ENCODE measurements at regions of chr19 and their contacts with region 1.

Region 1: GRCh38 chr19:51473009-51473707 is 5.2 kb upstream of the CEACAM18 start:
- DNase-seq: peak; percentile 74 to 94 (median 80)
- ATAC-seq: peak; percentile 66
- H3K4me3 ChIP-seq: no peak overlapping the region
- H3K27ac ChIP-seq: no peak overlapping the region
- H3K4me1 ChIP-seq: peaks cover 19 to 33% of the 10 kb centered on the region in 2 experiments
- H3K27me3 ChIP-seq: no peaks in the 10 kb centered on the region
- CTCF ChIP-seq: peak; percentile 93 to 98 (median 93)
- EP300 ChIP-seq: 0 out of 2 replicates have a peak, but pooled peaks have one; percentile 34
- POLR2A ChIP-seq: no peak
- RAD21 ChIP-seq: peak; percentile 91 to 98

Region 2: GRCh38 chr19:51422053-51422448 is 51.1 kb before region 1 on chr19:
- CTCF ChIA-PET with region 1: no interaction called
- POLR2A ChIA-PET with region 1: interaction called, 3 read pairs
- in situ Hi-C with region 1: no loop called
- intact Hi-C with region 1: loop called (anchors 1 kb)
- DNase-seq: peak; percentile 90 to 95 (median 94)
- ATAC-seq: peak; percentile 95
- H3K4me3 ChIP-seq: no peak overlapping the region
- H3K27ac ChIP-seq: no peak overlapping the region
- H3K4me1 ChIP-seq: peaks cover 3 to 23% of the 10 kb centered on the region in 2 experiments
- H3K27me3 ChIP-seq: no peaks in the 10 kb centered on the region
- CTCF ChIP-seq: peak; percentile 96
- EP300 ChIP-seq: peak; percentile 18; the same call in 1 of the 2 replicates
- POLR2A ChIP-seq: no peak
- RAD21 ChIP-seq: peak; percentile 98 to 100

Region 3: DNA sequence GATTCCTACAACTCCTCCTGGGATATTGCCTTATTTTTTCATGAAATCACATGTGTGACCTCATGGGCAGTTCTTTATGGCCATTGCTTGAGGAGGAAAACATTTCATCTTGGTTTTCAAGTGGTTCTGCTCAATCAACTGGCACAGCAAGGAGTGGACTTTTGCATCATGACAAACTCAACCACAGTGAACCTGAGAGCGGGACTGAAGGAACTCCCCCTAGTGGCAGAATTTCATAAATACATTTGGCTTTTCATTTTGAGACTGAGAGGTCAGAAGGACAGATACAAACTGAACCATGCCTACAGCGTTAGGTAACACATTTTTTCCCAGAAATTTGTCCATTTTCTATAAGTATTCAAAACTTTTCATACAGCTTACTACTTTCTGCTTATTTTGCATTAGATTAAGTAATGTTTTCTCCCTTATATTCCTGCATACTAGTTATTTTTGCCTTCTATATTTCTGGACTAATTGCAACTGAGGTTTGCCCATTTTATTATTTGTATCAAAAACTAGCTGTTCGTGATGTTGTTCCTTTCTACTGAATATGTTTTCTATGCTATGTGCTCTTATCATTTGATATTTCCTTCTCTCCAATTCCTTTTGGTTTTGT is 41.8 kb after region 1 on chr19:
- CTCF ChIA-PET with region 1: no interaction called
- POLR2A ChIA-PET with region 1: no interaction called
- in situ Hi-C with region 1: no loop called
- intact Hi-C with region 1: loop called (anchors 2 kb)
- DNase-seq: peak; percentile 72 to 85 (median 74)
- ATAC-seq: peak; percentile 87
- H3K4me3 ChIP-seq: no peak overlapping the region
- H3K27ac ChIP-seq: no peak overlapping the region
- H3K4me1 ChIP-seq: peaks cover 11 to 15% of the 10 kb centered on the region in 2 experiments
- H3K27me3 ChIP-seq: no peaks in the 10 kb centered on the region
- CTCF ChIP-seq: peak; percentile 78 to 88 (median 83)
- EP300 ChIP-seq: peak; percentile 43; the same call in 1 of the 2 replicates
- POLR2A ChIP-seq: no peak
- RAD21 ChIP-seq: peak; percentile 60 to 78

Region 4: DNA sequence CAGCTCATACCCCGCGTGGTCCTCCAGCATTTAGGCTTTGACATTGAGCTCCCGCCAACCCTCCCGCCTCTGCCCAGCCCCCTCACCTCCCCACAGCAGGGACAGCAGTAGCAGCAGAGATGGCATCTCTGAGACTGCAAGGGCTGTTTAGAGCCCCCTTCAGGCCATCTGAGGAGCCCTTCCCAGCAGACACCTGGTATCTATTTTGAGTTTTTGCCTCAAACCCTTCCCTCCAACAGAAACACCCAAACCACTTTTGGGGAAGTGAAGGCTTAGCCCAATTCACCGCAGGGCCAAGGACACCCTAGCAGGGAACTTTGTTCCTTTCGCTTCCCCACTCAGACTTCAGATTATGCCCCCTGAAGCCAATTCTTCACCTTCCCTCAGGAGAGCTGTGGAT is 91.6 kb after region 1 on chr19:
- CTCF ChIA-PET with region 1: interaction called, 4 read pairs
- POLR2A ChIA-PET with region 1: no interaction called
- in situ Hi-C with region 1: loop called (anchors 10 kb)
- intact Hi-C with region 1: loop called (anchors 5 kb)
- DNase-seq: peak; percentile 27 to 57 (median 47)
- ATAC-seq: peak; percentile 83
- H3K4me3 ChIP-seq: no peak overlapping the region
- H3K27ac ChIP-seq: peak overlapping the region; percentile 19; the same call in 1 of the 3 replicates
- H3K4me1 ChIP-seq: peaks cover 14 to 51% of the 10 kb centered on the region in 2 experiments; a peak in 4 of 5 replicates
- H3K27me3 ChIP-seq: no peaks in the 10 kb centered on the region
- CTCF ChIP-seq: peak; percentile 61 to 63 (median 63)
- EP300 ChIP-seq: no peak; the same call in 1 of the 2 replicates
- POLR2A ChIP-seq: no peak
- RAD21 ChIP-seq: peak; percentile 7 to 49; a peak in 2 of 4 replicates

Region 5: DNA sequence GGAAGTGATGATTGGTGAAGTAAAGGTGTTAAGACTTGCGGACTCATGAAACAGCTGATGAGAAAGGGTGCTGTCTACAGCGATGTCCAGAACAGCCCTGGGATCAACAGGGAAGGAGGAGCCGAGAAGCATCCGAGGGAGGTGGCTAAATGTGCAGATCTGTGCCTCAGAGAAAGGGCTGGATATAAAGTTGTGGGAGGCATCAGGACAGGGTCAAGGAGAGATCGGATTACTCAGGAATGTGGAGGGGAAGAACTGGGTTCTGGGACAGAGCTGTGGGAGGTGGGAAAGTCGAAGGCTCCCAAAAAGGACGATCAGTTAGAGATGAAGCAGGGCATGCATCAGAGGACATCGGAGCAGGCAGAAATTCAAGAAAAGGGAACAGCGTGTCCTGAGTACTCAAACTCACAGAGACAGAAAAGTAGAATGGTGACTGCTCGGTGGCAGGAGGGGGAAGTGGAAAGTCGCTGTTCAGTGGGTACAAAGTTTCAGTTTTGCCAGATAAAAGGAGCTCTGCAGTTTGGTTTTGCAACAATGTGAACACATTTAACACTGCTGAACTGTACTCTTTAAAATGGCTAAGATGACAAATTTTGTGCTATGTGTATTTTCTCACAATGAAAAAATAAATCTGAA is 171.6 kb after region 1 on chr19:
- CTCF ChIA-PET with region 1: no interaction called
- POLR2A ChIA-PET with region 1: no interaction called
- in situ Hi-C with region 1: no loop called
- intact Hi-C with region 1: loop called (anchors 5 kb)
- DNase-seq: no peak
- ATAC-seq: no peak
- H3K4me3 ChIP-seq: no peak overlapping the region
- H3K27ac ChIP-seq: no peak overlapping the region
- H3K4me1 ChIP-seq: no peaks in the 10 kb centered on the region; a peak in 1 of 5 replicates
- H3K27me3 ChIP-seq: peaks cover 20 to 42% of the 10 kb centered on the region in 2 experiments
- CTCF ChIP-seq: no peak
- EP300 ChIP-seq: no peak
- POLR2A ChIP-seq: no peak
- RAD21 ChIP-seq: no peak

Region 6: GRCh38 chr19:51651216-51651846 is 178.2 kb after region 1 on chr19:
- CTCF ChIA-PET with region 1: interaction called, 12 read pairs
- POLR2A ChIA-PET with region 1: interaction called, 3 read pairs
- in situ Hi-C with region 1: loop called (anchors 10 kb)
- intact Hi-C with region 1: loop called (anchors 2 kb)
- DNase-seq: peak in 1 of 4 experiments; percentile 17
- ATAC-seq: no peak
- H3K4me3 ChIP-seq: no peak overlapping the region
- H3K27ac ChIP-seq: no peak overlapping the region
- H3K4me1 ChIP-seq: peaks cover 0 to 7% of the 10 kb centered on the region in 2 experiments; a peak in 3 of 5 replicates
- H3K27me3 ChIP-seq: peaks cover 9 to 20% of the 10 kb centered on the region in 2 experiments; a peak in 3 of 5 replicates
- CTCF ChIP-seq: no peak
- EP300 ChIP-seq: no peak
- POLR2A ChIP-seq: no peak
- RAD21 ChIP-seq: no peak

Measured in K562 (cell line).